MCF 10A (cell line): ENCODE measurements at regions of chr17 and their contacts with region 1.

Region 1: DNA sequence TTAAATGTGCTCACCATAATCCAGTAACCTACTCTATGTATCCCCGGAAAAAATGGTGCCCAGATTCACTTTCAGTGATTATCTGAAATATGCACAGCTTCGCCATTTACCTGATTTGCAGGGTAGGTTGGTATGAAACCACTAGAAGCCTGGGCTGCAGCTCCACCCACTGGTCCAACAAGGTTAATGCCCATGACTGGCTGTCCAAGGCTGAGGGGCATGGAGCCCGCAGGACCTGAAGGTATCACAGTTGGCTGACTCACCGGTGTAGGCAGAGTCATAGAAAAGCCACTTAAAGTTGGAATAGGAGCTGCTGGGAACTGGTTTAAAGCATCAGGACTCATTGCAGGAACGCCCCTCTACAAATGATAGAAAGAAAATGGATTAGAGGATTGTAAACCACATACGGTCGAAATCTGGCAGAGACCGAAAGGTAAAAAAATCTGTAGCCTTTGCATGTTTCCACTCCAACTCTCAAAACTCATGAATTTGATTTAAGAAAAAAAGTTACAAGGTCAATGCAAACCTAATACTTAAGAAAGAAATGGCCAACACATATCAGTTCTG is 38.6 kb downstream of the SYNRG start:
- DNase-seq: peak; percentile 90
- H3K4me3 Mint-ChIP-seq: no peak overlapping the region
- H3K27ac Mint-ChIP-seq: peak overlapping the region; percentile 42
- H3K4me1 Mint-ChIP-seq: peaks cover 10% of the 10 kb centered on the region
- H3K27me3 Mint-ChIP-seq: no peaks in the 10 kb centered on the region
- CTCF ChIP-seq: peak; percentile 75

Region 2: DNA sequence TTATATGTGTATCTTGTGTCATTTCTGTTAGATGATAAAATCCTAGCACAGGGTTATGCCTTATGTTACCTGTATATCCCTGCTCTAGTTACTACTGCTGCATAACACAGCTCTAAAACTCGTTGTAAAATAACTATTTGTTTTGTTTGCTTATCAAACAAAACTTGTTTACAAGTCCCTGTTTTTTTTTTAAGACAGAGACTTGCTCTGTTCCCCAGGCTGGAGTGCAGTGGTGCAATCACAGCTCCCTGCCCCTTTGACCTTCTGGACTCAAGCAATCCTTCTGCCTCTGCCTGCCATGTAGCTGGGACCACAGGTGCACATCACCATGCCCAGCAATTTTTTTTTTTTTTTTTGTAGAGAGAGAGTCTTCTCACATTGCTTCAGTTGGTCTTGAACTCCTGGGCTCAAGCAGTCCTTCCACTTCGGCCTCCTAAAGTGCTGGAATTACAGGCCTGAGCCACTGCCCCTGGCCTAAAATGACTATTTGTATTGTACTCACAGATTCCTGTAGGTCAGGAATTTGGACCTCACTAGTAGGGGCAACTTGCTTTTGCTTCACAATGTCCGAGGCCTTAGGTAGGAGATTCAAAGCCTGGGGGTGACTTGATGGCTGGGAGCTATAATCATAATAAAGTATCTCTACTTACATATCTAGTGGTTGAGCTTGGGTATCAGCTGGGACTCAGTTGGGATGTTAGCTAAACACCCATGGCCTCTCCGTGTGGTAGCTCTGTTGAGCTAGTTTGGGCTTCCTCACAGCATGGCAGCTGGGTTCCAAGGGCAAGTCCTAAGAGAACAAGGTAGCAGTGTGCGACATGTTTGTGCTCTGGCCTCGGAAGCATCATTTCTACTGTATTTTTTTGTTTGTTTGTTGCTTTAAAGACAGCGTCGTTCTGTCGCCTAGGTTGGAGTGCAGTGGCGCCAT is 68.3 kb before region 1 on chr17:
- CTCF ChIA-PET with region 1: interaction called, 10 read pairs
- POLR2A ChIA-PET with region 1: no interaction called
- intact Hi-C with region 1: no loop called
- DNase-seq: no peak
- H3K4me3 Mint-ChIP-seq: no peak overlapping the region
- H3K27ac Mint-ChIP-seq: no peak overlapping the region
- H3K4me1 Mint-ChIP-seq: peaks cover 9% of the 10 kb centered on the region
- H3K27me3 Mint-ChIP-seq: no peaks in the 10 kb centered on the region
- CTCF ChIP-seq: no peak

Region 3: GRCh38 chr17:37527249-37527851 is 43.3 kb before region 1 on chr17:
- CTCF ChIA-PET with region 1: interaction called, 34 read pairs
- POLR2A ChIA-PET with region 1: interaction called, 4 read pairs
- intact Hi-C with region 1: loop called (anchors 1 kb)
- DNase-seq: peak; percentile 74
- H3K4me3 Mint-ChIP-seq: no peak overlapping the region
- H3K27ac Mint-ChIP-seq: no peak overlapping the region
- H3K4me1 Mint-ChIP-seq: no peaks in the 10 kb centered on the region
- H3K27me3 Mint-ChIP-seq: no peaks in the 10 kb centered on the region
- CTCF ChIP-seq: peak; percentile 50